GM18951 (cell line): ENCODE measurements at regions of chr2 and their contacts with region 1.

Region 1: GRCh38 chr2:44087036-44087713 is 81.5 kb upstream of the PPM1B start:
- POLR2A ChIP-seq: no peak

Region 2: GRCh38 chr2:43872151-43872550 is 215.0 kb before region 1 on chr2:
- in situ Hi-C with region 1: no loop called
- POLR2A ChIP-seq: no peak

Region 3: DNA sequence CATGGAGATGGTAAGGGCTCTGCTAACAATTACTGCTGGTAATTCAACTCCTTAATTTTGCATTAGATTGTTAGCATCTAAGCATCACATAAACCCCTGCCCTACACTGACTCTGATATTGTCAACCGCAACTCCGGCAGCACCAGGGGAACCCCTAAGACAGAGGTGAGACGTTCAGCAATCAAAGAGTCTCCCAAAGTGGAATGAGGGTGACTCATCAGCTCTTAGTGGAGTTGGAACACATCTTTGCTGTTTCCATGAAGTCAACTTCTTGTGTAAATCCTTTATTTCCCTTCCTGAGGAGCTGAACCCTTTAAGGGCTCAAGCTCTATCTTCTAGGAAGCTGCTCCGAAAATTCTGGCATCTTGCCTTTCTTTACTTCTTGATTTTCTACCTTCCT is 196.3 kb before region 1 on chr2:
- in situ Hi-C with region 1: no loop called
- POLR2A ChIP-seq: no peak

Region 4: DNA sequence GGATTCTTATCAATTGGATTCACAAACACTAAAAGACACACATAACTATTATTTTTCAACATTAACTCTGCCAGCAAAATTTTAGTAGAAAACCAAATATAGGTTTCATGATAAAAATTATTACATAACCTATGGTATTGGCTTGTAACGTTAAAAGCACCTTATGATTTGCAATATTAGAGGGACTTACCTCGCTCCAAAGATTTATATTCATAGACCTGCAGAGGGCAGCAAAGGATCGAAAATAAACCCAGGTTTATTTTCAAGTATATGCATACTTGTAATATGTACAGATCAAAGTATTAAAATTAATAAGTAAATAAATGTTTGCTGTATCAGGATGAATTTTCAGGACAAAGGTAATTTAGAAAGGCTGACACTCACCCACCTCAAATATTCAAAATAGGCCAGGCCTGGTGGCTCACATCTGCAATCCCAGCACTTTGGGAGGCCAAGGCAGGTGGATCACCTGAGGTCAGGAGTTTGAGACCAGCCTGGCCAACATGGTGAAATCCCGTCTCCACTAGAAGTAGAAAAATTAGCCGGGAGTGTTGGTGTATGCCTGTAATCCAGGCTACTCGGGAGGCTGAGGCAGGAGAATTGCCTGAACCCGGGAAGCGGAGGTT is 136.7 kb before region 1 on chr2:
- in situ Hi-C with region 1: no loop called
- POLR2A ChIP-seq: no peak

Region 5: DNA sequence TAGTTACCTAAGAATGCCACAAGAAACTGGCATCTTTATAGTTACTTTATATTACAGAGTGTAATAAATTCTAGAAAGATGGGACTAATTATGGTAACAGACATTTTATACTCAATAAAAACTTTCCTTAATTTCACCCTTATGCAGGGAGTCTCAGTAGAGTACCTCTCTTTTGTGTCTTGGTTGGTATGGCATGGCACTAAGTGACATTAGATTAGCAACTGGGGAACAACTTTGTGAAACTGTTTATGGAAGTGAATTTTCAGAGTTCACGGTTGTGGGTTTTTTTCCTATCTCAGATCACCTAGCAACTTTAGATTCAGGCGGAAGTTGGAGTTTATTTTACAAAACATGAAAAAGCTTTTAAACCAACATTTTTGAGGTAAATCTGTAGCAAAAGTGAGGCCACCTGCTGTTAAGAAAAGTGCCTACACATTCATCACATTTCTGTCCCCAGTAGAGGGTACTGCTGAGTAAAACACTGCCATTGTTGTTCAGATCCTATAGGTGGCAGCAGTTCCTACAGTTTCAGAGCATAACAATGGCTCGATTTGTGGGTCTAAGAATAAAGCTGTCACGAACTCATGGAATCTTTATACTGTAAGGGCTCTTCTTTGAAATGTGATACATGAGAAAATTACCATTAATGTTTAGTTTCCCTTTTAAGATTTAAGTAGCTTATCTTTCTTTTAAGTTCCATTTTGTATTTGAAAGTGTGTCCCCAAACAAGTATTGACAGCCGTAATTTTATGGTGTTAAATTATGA is 392.1 kb after region 1 on chr2:
- in situ Hi-C with region 1: loop called (anchors 25 kb)
- POLR2A ChIP-seq: no peak